PC-3 (cell line): ENCODE measurements at regions of chr2 and their contacts with region 1.

Region 1: DNA sequence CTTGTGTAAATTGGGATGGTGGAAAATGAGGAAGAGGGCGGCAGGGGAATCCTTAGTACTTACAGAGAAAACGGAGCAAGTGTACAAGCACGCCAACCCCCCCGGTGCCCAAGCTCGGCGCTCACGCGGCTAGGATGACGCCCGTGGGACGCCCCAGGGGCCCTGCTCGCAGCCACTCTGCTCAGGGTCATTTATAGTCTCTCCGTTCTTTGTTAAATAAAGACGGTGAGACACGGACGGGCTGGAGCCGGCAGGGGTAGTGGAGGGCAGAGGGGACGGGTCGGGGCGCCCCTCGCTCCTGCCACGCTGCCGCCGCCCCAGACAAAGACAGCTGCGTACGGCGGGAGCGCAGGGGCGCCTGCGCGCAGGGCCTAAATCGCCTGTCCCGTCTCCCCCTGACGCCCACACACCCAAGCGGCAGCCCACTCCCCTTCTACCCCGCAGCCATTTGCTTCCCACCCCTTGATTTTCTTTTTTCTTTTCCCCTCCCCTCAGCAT is 37.8 kb downstream of the PCBP1 start:
- DNase-seq: peak; percentile 38
- ATAC-seq: peak; percentile 66
- H3K4me3 ChIP-seq: peak overlapping the region; percentile 78
- H3K27ac ChIP-seq: peak overlapping the region; percentile 72
- H3K4me1 ChIP-seq: peaks cover 21% of the 10 kb centered on the region
- H3K27me3 ChIP-seq: no peaks in the 10 kb centered on the region
- CTCF ChIP-seq: no peak

Region 2: GRCh38 chr2:70062268-70062667 is 62.8 kb before region 1 on chr2:
- CTCF ChIA-PET with region 1: no interaction called
- POLR2A ChIA-PET with region 1: no interaction called
- intact Hi-C with region 1: no loop called
- DNase-seq: no peak
- ATAC-seq: no peak
- H3K4me3 ChIP-seq: no peak overlapping the region
- H3K27ac ChIP-seq: no peak overlapping the region
- H3K4me1 ChIP-seq: no peaks in the 10 kb centered on the region
- H3K27me3 ChIP-seq: no peaks in the 10 kb centered on the region
- CTCF ChIP-seq: peak; percentile 22; the same call in 1 of the 2 replicates

Region 3: DNA sequence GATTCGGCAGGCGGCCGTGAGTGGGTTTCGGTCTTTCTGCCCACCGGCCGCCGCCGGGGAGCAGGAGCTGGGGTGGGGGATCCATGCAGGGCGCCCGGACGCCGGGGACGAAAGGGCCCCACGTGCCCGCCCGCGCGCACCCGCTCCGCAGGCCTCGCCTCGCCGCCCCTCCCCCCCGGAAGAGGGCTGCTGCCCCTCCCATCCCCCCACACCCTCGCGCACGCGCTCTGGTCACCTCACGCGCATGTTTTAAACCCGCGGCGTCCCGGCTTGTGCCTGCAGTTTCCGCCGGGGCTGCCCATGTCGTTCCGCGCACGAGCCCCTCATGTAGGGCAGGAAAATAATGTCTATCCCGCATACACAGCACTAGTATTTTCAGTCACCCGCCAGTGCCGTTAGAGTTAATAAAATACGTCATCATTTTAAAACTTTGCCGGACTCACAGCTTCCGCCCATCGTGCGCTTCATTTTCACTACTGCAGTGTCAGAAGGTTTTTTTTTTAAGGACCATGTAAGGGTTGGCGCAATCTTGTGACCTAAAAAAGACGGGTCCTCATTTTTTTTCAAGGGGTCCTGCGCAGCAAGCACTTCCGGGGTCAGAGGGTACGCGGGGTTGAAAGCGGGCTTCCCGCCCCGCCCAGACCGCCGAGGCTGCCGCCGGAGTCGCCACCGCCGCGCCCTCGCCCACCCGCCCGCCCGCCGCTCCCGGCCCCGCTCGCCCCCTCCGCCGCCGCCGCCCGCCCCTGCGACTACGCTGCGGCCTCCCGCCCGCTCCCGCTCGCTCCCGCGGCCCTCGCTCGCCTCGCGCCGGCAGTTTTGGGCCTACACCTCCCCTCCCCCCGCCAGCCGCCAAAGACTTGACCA is 38.0 kb before region 1 on chr2 and contains the start of gene PCBP1:
- CTCF ChIA-PET with region 1: no interaction called
- POLR2A ChIA-PET with region 1: interaction called, 20 read pairs
- intact Hi-C with region 1: loop called (anchors 5 kb)
- DNase-seq: peak; percentile 87
- ATAC-seq: peak; percentile 21
- H3K4me3 ChIP-seq: peak within 1 kb of the TSS; percentile 95
- H3K27ac ChIP-seq: peak within 1 kb of the TSS; percentile 100
- H3K4me1 ChIP-seq: peaks cover 55% of the 10 kb centered on the region
- H3K27me3 ChIP-seq: no peaks in the 10 kb centered on the region
- CTCF ChIP-seq: no peak
- total RNA-seq, gene PCBP1: 39.2 and 59.7 TPM in 2 replicates

Region 4: GRCh38 chr2:70104231-70105111 is 20.6 kb before region 1 on chr2:
- CTCF ChIA-PET with region 1: no interaction called
- POLR2A ChIA-PET with region 1: interaction called, 9 read pairs
- intact Hi-C with region 1: loop called (anchors 2 kb)
- DNase-seq: no peak
- ATAC-seq: no peak
- H3K4me3 ChIP-seq: no peak overlapping the region
- H3K27ac ChIP-seq: no peak overlapping the region
- H3K4me1 ChIP-seq: peaks cover 12% of the 10 kb centered on the region
- H3K27me3 ChIP-seq: no peaks in the 10 kb centered on the region
- CTCF ChIP-seq: no peak

Region 5: GRCh38 chr2:70173520-70173919 is 48.5 kb after region 1 on chr2:
- CTCF ChIA-PET with region 1: no interaction called
- POLR2A ChIA-PET with region 1: no interaction called
- intact Hi-C with region 1: no loop called
- DNase-seq: no peak
- ATAC-seq: no peak
- H3K4me3 ChIP-seq: no peak overlapping the region
- H3K27ac ChIP-seq: no peak overlapping the region
- H3K4me1 ChIP-seq: no peaks in the 10 kb centered on the region
- H3K27me3 ChIP-seq: no peaks in the 10 kb centered on the region
- CTCF ChIP-seq: no peak